Calu3 (cell line): ENCODE measurements at regions of chr6 and their contacts with region 1.

Region 1: DNA sequence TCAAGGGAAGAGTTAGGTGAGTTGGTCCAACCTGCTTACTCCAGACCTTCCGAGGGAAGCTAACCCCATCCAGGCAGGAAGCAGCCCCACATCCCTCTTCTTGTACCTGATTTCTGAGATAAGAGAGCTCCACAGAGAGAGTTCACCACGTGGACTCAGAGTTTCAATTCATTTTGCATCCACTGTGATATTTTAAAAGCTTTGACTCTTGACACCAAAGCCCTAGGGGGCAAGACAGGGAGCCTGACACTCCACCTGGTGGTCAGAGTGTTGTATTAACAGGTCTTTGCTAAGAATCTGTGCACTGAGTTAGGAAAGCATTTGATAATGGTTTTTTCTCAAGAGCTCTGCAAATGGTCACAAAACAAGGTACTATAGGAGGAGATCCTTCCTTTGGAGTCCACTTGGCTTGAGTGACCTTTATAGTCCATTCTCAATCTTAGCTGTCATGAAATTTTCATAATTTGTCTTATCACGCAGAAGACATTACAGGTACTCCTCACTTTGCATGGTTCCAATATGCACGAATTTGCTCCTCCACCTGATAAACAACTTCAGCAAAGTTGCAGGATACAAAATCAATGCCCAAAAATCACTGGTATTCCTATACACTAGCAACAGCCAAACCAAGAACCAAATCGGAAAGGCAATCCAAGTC is 56.2 kb upstream of the RIPOR2 start:
- DNase-seq: peak; percentile 84
- H3K4me3 Mint-ChIP-seq: no peak overlapping the region
- H3K27ac Mint-ChIP-seq: no peak overlapping the region
- H3K4me1 Mint-ChIP-seq: peaks cover 54% of the 10 kb centered on the region
- H3K27me3 Mint-ChIP-seq: no peaks in the 10 kb centered on the region
- CTCF ChIP-seq: peak; percentile 98

Region 2: DNA sequence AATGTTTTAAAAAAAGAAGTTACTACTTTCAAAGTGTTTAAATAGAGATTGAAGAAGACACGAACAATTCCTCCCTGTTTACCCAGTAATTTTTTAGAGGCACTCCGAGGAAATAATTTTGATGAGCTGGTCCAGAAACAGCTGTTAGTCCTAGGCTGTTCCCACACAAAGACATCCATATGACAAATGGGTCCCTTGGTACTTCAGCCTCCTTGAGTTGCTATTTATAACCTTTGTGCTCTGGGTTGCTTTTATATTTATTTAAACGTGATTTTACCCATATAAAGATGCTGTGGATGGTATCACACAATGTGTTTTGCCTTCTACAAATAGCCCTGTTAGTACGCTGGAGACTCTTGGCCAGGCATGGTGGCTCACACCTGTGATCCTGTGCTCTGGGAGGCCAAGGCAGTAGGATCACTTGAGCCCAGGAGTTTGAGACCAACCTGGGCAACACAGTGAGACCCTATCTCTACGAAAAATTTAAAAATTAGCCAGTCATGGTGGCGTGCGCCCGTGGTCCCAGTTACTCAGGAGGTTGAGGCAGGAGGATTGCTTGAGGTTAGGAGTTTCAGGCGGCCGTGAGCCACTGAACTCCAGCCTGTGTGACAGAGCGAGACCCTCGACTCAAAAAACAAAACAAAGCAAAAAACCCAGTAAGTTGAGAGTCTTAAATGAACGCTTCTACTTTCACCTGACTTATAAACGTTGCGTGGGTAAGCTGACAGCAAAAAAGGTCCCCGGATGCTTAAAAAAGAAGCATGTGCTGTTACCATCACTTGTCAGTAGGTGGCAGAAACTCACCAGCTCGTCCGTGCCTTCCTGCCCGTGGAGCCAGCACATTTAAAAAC is 136.3 kb before region 1 on chr6:
- CTCF ChIA-PET with region 1: interaction called, 127 read pairs
- intact Hi-C with region 1: loop called (anchors 1 kb)
- DNase-seq: peak; percentile 81
- H3K4me3 Mint-ChIP-seq: no peak overlapping the region
- H3K27ac Mint-ChIP-seq: no peak overlapping the region
- H3K4me1 Mint-ChIP-seq: peaks cover 29% of the 10 kb centered on the region
- H3K27me3 Mint-ChIP-seq: no peaks in the 10 kb centered on the region
- CTCF ChIP-seq: peak; percentile 94

Region 3: DNA sequence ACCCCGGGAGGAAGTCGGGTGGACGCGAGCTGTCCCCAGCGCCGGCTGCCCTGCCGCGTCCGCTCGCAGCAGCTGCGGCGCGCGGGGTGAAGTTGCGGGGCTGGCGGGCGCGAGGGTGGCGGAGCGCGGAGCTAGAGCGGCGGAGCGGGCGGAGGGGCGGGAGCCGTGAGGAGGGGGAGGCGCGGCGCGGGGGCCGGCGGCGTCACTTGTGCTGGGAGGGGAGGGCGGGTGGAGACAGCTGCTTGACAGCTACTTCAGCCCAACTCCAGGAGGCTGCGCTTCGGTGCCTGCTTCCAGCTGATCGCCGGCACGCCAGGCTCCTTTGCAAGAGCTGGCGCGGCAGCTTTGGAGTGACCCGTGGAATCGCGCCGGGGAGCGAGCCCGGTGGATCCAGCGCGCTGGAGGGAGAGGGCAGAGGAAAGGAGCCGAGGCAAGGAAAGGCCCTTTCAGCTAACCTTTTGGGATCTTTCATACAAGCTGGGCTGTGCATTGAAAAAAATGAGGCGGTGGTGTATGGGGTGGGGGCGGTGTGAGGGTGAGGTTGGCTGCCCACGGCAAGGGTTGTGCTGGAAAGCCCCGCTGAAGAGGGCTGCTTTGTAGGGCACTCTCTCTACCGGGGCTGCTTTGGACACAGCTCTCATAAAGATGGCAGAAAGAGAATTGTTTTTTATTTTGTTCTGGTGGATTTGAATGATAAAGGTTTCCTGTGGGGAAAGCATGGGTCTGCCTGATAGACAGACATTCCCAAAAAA is 80.8 kb before region 1 on chr6:
- CTCF ChIA-PET with region 1: interaction called, 32 read pairs
- intact Hi-C with region 1: loop called (anchors 2 kb)
- DNase-seq: peak; percentile 55
- H3K4me3 Mint-ChIP-seq: peak overlapping the region; percentile 76
- H3K27ac Mint-ChIP-seq: no peak overlapping the region
- H3K4me1 Mint-ChIP-seq: peaks cover 7% of the 10 kb centered on the region
- H3K27me3 Mint-ChIP-seq: peaks cover 100% of the 10 kb centered on the region
- CTCF ChIP-seq: no peak

Region 4: GRCh38 chr6:24933868-24934401 is 58.0 kb before region 1 on chr6:
- CTCF ChIA-PET with region 1: interaction called, 6 read pairs
- intact Hi-C with region 1: loop called (anchors 5 kb)
- DNase-seq: peak; percentile 36
- H3K4me3 Mint-ChIP-seq: no peak overlapping the region
- H3K27ac Mint-ChIP-seq: no peak overlapping the region
- H3K4me1 Mint-ChIP-seq: peaks cover 9% of the 10 kb centered on the region
- H3K27me3 Mint-ChIP-seq: peaks cover 13% of the 10 kb centered on the region
- CTCF ChIP-seq: peak; percentile 78

Region 5: GRCh38 chr6:24960991-24961475 is 30.9 kb before region 1 on chr6:
- CTCF ChIA-PET with region 1: no interaction called
- intact Hi-C with region 1: no loop called
- DNase-seq: no peak
- H3K4me3 Mint-ChIP-seq: no peak overlapping the region
- H3K27ac Mint-ChIP-seq: no peak overlapping the region
- H3K4me1 Mint-ChIP-seq: no peaks in the 10 kb centered on the region
- H3K27me3 Mint-ChIP-seq: no peaks in the 10 kb centered on the region
- CTCF ChIP-seq: no peak

Region 6: GRCh38 chr6:24980507-24981387 is 11.2 kb before region 1 on chr6:
- CTCF ChIA-PET with region 1: interaction called, 25 read pairs
- intact Hi-C with region 1: no loop called
- DNase-seq: peak; percentile 29
- H3K4me3 Mint-ChIP-seq: no peak overlapping the region
- H3K27ac Mint-ChIP-seq: peak overlapping the region; percentile 66
- H3K4me1 Mint-ChIP-seq: peaks cover 46% of the 10 kb centered on the region
- H3K27me3 Mint-ChIP-seq: no peaks in the 10 kb centered on the region
- CTCF ChIP-seq: no peak

Region 7: GRCh38 chr6:25006565-25007001 is 14.6 kb after region 1 on chr6:
- CTCF ChIA-PET with region 1: interaction called, 23 read pairs
- intact Hi-C with region 1: no loop called
- DNase-seq: peak; percentile 58
- H3K4me3 Mint-ChIP-seq: no peak overlapping the region
- H3K27ac Mint-ChIP-seq: peak overlapping the region; percentile 9
- H3K4me1 Mint-ChIP-seq: peaks cover 59% of the 10 kb centered on the region
- H3K27me3 Mint-ChIP-seq: no peaks in the 10 kb centered on the region
- CTCF ChIP-seq: no peak

Region 8: DNA sequence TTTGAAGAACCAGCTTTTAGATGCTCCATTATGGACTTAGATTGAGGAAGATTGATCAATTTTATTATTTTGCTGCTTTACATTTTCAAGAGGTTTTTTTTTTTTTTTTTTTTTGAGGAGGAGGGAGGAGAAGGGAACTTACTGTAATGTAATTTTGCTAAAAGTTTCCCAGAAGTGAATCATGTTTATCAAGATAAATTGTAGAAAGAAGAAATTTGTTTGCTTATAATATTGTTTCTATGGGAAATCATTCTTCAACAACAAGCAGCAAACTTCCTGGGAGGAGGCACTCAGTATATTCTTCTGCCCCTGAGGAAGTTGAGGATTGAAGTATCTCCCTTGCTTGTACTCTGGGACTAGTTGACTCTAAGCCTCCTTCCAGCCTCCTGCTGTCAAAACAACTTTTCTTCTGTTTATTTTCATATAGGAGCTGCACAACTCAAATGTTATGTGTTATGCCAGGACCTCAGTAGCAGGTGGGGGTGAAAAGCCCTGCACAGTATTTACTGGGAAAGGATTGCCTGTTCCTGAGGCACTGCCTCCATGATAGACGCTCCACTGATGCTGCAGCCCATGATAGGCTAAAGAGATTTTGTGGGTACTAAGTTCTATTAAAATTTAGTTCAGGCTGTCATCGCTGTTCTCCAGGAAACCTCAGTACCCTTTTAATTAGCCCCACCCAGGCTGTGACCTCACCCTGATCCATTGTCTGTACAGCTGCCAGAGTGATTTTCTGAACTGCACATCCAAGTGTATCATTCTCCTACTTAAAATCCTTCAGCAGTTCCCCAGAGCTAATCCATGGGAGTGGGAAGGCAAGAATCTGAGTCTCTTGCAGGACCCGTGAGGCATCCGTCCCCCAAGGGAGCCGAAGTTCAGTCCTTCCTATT is 339.1 kb after region 1 on chr6:
- CTCF ChIA-PET with region 1: no interaction called
- intact Hi-C with region 1: no loop called
- DNase-seq: no peak
- H3K4me3 Mint-ChIP-seq: no peak overlapping the region
- H3K27ac Mint-ChIP-seq: no peak overlapping the region
- H3K4me1 Mint-ChIP-seq: peaks cover 48% of the 10 kb centered on the region
- H3K27me3 Mint-ChIP-seq: no peaks in the 10 kb centered on the region
- CTCF ChIP-seq: no peak